ENCODE measurements at regions of chr11 and their contacts with region 1.

Region 1: GRCh38 chr11:130924770-130925169 is 8.5 kb upstream of the SNX19 start:
- DNase-seq: no peak
- H3K4me3 ChIP-seq: no peak overlapping the region
- H3K27ac ChIP-seq: no peak overlapping the region
- H3K4me1 ChIP-seq: no peaks in the 10 kb centered on the region
- H3K27me3 ChIP-seq: no peaks in the 10 kb centered on the region
- CTCF ChIP-seq: no peak

Region 2: DNA sequence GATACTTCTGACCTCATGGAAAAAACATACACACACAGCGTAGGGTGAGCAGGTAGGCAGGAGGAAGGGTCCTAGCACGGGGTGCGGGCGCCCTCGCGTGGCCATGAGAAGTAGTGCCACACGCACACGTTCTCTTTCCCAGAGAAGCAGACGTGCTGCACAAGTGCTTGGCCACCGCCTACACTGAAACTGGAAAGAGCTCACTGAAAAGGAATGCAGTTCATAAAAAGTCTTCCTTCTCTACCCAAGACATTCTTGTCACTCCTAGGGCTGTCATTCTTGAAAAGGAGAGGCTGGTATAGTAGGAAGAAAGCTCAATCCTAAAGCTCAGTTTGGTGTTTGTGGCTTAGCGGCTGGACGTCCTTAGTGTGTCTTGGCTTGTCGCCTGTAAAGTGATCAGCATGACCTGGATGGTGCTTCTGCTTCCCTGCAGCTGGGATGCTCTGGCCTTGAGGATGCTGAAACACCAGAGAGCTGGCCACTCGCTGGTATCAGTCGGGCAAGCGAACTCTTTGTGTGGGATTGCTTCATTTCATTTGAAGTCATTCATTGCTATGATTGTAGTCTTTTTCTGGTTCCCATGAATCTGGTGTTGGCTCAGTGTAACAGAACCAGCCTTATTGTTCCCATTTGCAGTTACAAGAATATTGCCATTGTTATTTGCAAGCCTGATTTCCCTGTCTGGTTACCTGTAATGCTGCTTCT is 749.4 kb after region 1 on chr11:
- intact Hi-C with region 1: loop called (anchors 10 kb)
- DNase-seq: peak in 1 of 2 donors; percentile 41
- H3K4me3 ChIP-seq: no peak overlapping the region
- H3K27ac ChIP-seq: no peak overlapping the region
- H3K4me1 ChIP-seq: no peaks in the 10 kb centered on the region
- H3K27me3 ChIP-seq: peaks cover 0 to 3% of the 10 kb centered on the region in 2 donors
- CTCF ChIP-seq: peak; percentile 67 to 87